CD8-positive, alpha-beta T cell (primary cell): ENCODE measurements at regions of chr22 and their contacts with region 1.

Region 1: DNA sequence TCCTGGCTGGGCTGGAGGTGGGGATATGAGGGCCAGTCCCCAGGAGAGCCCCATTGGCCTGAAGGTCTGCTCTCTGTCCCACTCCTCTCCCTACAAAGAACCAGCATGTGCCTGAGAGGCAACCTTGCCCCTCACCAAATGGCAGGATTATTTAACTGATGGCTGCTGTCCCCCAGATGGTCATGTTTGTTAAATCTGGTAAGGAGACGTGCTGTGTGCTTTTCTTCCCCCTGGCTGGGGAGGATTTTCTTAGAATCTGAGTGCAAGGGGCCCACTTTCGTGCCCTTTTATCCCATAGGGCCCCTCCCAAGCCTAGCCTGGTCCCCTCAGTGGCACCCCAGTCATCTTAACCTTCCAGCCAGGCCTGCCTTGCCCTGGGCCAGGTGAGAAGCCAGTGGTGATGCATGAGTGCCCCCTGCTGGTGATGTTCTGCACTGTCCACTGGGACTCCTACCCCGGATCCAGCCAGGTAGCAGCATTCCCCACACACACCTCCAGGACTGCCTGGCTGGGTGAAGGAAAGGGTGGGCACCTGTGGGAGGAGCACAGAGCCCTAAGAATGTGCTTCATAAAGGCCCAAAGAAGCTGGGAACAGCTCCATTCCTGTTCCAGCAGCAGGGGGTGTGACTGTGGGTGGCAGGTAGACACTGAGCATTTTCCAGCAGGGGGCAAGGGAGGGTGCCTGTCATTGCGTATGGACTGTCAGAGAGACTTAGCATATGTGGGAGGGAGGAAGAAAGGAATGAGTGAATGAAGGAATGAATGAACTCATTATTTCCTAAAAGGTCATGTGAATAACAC is 28.9 kb downstream of the MFNG start:
- DNase-seq: peak; percentile 72 to 90 (median 83)
- ATAC-seq: peak; percentile 98
- H3K4me3 ChIP-seq: no peak overlapping the region
- H3K4me3 Mint-ChIP-seq: no peak overlapping the region
- H3K27ac ChIP-seq: no peak overlapping the region
- H3K27ac Mint-ChIP-seq: no peak overlapping the region
- H3K4me1 ChIP-seq: no peaks in the 10 kb centered on the region
- H3K4me1 Mint-ChIP-seq: no peaks in the 10 kb centered on the region
- H3K27me3 ChIP-seq: no peaks in the 10 kb centered on the region
- H3K27me3 Mint-ChIP-seq: no peaks in the 10 kb centered on the region
- CTCF ChIP-seq: peak; percentile 82

Region 2: DNA sequence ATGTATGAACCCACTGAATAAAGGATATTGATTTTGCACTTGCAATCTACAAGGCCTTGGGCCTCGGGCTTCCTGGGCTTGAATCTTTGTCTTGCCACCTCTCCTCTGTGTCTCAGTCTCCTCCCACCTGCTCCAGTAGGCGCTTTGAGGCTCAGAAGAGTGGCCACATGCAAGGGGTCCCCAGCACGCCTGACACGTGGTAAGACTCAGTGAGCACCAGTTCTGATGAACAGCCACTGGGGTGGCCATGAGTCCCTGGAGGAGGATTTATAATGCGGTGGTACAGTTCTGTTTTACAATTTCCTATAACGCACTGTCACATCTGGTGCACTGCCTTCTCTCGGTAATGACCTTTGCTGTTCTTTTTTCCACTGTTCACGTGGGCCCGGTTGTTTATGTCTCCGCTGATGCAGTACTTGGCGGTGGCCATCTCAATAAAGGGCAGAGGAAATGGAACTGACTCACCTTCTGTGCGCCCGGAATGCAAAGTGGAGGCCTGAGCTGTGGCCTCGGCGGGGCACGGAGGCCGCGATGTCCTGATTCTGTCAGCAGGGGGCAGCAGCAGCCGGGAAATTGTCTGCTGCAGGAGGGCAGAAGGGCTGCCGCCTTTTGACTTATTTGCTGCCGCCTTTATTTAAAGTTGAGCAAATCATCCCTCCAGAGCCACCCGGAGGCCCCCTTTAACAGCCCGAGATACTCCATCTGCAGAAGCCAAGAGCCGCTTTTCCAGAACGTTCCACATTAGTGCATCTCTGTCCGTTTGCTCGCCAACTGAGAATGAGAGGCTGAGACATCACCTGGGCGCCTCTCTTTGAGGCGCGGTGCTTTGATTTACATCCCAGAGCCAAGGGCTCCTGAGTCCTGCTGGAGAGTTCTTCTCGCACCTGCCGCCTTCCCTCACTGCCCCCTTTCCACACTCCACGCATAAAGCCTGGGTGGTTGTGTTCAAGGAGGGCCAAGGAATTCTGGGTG is 675.4 kb before region 1 on chr22:
- CTCF ChIA-PET with region 1: no interaction called
- POLR2A ChIA-PET with region 1: no interaction called
- intact Hi-C with region 1: loop called in 1 of 2 experiments (anchors 1 kb)
- DNase-seq: peak; percentile 71 to 93 (median 85)
- ATAC-seq: peak; percentile 96
- H3K4me3 ChIP-seq: no peak overlapping the region
- H3K4me3 Mint-ChIP-seq: no peak overlapping the region
- H3K27ac ChIP-seq: no peak overlapping the region
- H3K27ac Mint-ChIP-seq: peak overlapping the region; percentile 41
- H3K4me1 ChIP-seq: peaks cover 11% of the 10 kb centered on the region
- H3K4me1 Mint-ChIP-seq: peaks cover 16% of the 10 kb centered on the region
- H3K27me3 ChIP-seq: peaks cover 0 to 2% of the 10 kb centered on the region in 2 experiments
- H3K27me3 Mint-ChIP-seq: peaks cover 2% of the 10 kb centered on the region
- CTCF ChIP-seq: peak; percentile 95

Region 3: GRCh38 chr22:37077884-37078485 is 379.3 kb before region 1 on chr22:
- CTCF ChIA-PET with region 1: no interaction called
- POLR2A ChIA-PET with region 1: no interaction called
- intact Hi-C with region 1: loop called in 1 of 2 experiments (anchors 2 kb)
- DNase-seq: peak; percentile 68 to 93 (median 83)
- ATAC-seq: peak; percentile 14
- H3K4me3 ChIP-seq: no peak overlapping the region
- H3K4me3 Mint-ChIP-seq: peak overlapping the region; percentile 47
- H3K27ac ChIP-seq: peak overlapping the region in 1 of 2 experiments; percentile 51
- H3K27ac Mint-ChIP-seq: peak overlapping the region; percentile 99
- H3K4me1 ChIP-seq: peaks cover 39% of the 10 kb centered on the region
- H3K4me1 Mint-ChIP-seq: peaks cover 31% of the 10 kb centered on the region
- H3K27me3 ChIP-seq: no peaks in the 10 kb centered on the region
- H3K27me3 Mint-ChIP-seq: peaks cover 3% of the 10 kb centered on the region
- CTCF ChIP-seq: peak; percentile 98

Region 4: GRCh38 chr22:37145180-37146050 is 311.9 kb before region 1 on chr22:
- CTCF ChIA-PET with region 1: no interaction called
- POLR2A ChIA-PET with region 1: no interaction called
- intact Hi-C with region 1: no loop called
- DNase-seq: no peak
- ATAC-seq: no peak
- H3K4me3 ChIP-seq: peak overlapping the region in 1 of 2 experiments; percentile 98
- H3K4me3 Mint-ChIP-seq: peak overlapping the region; percentile 96
- H3K27ac ChIP-seq: peak overlapping the region; percentile 5 to 94
- H3K27ac Mint-ChIP-seq: peak overlapping the region; percentile 96
- H3K4me1 ChIP-seq: peaks cover 57% of the 10 kb centered on the region
- H3K4me1 Mint-ChIP-seq: peaks cover 58% of the 10 kb centered on the region
- H3K27me3 ChIP-seq: no peaks in the 10 kb centered on the region
- H3K27me3 Mint-ChIP-seq: no peaks in the 10 kb centered on the region
- CTCF ChIP-seq: no peak

Region 5: GRCh38 chr22:37267135-37267587 is 190.1 kb before region 1 on chr22:
- CTCF ChIA-PET with region 1: interaction called, 47 read pairs
- POLR2A ChIA-PET with region 1: no interaction called
- intact Hi-C with region 1: loop called in 1 of 2 experiments (anchors 1 kb)
- DNase-seq: peak; percentile 51 to 86 (median 71)
- ATAC-seq: peak; percentile 95
- H3K4me3 ChIP-seq: peak overlapping the region; percentile 66 to 83
- H3K4me3 Mint-ChIP-seq: peak overlapping the region; percentile 89
- H3K27ac ChIP-seq: peak overlapping the region; percentile 83 to 84
- H3K27ac Mint-ChIP-seq: peak overlapping the region; percentile 94
- H3K4me1 ChIP-seq: peaks cover 22% of the 10 kb centered on the region
- H3K4me1 Mint-ChIP-seq: peaks cover 24% of the 10 kb centered on the region
- H3K27me3 ChIP-seq: no peaks in the 10 kb centered on the region
- H3K27me3 Mint-ChIP-seq: no peaks in the 10 kb centered on the region
- CTCF ChIP-seq: peak; percentile 94

Region 6: DNA sequence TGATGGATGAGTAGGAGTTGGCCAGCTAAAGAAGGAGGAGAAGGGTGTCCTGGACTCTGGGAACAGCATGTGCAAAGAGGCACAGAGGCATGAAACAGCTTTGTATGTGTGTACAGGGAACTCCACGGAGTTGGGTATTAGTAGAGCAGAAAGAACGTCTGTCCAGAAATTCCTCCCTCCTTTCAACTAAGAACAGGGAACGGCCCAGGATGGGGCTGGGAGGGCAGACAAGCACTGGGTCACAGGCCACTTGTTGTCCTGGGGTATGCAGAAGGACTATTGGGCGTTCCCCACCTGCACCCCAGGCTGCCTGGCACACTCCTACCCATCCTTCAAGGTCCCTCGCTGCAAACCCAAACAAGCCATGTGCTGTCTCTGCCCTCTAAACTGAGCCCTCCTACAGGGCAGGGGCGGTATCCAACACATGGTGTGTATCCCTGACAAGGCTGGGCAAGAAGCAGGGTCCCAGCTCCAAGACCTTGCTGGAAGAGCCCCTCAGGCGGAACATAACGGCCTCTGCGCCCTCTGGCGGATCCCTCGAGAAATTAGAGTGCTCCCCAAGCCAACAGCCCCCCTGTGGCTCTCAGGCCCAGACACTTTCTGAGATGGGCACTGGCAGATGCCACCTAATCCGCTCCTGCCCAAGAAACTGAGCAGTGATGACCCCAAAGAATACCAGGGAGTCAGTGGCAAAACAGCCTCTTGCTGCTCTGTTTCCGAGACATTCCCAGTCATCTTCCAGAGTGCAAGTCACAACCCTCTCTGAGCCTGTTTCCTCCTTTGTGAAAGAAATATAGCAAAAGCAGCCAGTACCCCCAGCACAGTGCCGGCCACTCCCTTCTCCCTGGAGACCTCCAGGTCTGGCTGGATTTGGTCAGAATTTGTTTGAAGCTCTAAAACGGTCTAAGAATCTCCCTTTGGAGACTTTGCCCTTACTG is 28.4 kb before region 1 on chr22:
- CTCF ChIA-PET with region 1: interaction called, 10 read pairs
- POLR2A ChIA-PET with region 1: no interaction called
- intact Hi-C with region 1: no loop called
- DNase-seq: peak; percentile 30 to 80 (median 65)
- ATAC-seq: peak; percentile 62
- H3K4me3 ChIP-seq: no peak overlapping the region
- H3K4me3 Mint-ChIP-seq: peak overlapping the region; percentile 22
- H3K27ac ChIP-seq: no peak overlapping the region
- H3K27ac Mint-ChIP-seq: no peak overlapping the region
- H3K4me1 ChIP-seq: peaks cover 17% of the 10 kb centered on the region
- H3K4me1 Mint-ChIP-seq: peaks cover 22% of the 10 kb centered on the region
- H3K27me3 ChIP-seq: peaks cover 17 to 25% of the 10 kb centered on the region in 2 experiments
- H3K27me3 Mint-ChIP-seq: peaks cover 54% of the 10 kb centered on the region
- CTCF ChIP-seq: peak; percentile 54

Region 7: DNA sequence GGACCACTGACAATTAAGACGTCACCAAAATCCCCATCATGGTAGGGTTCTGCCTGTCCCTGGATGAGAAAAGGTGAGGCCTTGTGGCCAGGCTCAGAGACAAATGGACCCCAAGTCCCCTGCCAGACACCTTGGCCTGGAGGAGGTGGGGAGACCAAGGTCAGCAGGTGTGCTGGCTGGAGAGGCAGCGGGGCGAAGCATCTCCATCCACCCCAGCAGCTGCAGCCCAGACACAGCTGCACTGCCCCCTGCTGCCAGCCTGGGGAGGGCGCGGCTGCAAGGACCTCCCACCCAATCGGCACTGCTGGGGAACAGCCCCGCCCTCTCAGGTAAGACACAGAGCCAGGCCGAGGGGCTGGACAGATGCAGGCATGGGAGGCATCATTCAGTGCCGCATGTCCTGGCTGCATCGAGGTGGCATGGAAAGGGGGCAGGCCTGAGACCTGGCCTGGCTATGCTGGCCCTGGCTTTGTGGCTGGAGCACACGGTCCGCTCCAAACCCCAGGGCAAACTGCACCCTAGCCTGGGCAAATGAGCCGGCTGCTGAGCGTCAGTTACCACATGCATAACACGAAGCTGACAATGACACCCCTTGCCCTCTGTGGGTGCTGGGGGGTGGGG is 41.1 kb after region 1 on chr22:
- CTCF ChIA-PET with region 1: interaction called, 13 read pairs
- POLR2A ChIA-PET with region 1: no interaction called
- intact Hi-C with region 1: no loop called
- DNase-seq: peak; percentile 47 to 85 (median 75)
- ATAC-seq: peak; percentile 99
- H3K4me3 ChIP-seq: no peak overlapping the region
- H3K4me3 Mint-ChIP-seq: no peak overlapping the region
- H3K27ac ChIP-seq: no peak overlapping the region
- H3K27ac Mint-ChIP-seq: no peak overlapping the region
- H3K4me1 ChIP-seq: peaks cover 20% of the 10 kb centered on the region
- H3K4me1 Mint-ChIP-seq: peaks cover 29% of the 10 kb centered on the region
- H3K27me3 ChIP-seq: peaks cover 0 to 2% of the 10 kb centered on the region in 2 experiments
- H3K27me3 Mint-ChIP-seq: no peaks in the 10 kb centered on the region
- CTCF ChIP-seq: peak; percentile 67